ENCODE measurements at regions of chr7 and their contacts with region 1.

Region 1: DNA sequence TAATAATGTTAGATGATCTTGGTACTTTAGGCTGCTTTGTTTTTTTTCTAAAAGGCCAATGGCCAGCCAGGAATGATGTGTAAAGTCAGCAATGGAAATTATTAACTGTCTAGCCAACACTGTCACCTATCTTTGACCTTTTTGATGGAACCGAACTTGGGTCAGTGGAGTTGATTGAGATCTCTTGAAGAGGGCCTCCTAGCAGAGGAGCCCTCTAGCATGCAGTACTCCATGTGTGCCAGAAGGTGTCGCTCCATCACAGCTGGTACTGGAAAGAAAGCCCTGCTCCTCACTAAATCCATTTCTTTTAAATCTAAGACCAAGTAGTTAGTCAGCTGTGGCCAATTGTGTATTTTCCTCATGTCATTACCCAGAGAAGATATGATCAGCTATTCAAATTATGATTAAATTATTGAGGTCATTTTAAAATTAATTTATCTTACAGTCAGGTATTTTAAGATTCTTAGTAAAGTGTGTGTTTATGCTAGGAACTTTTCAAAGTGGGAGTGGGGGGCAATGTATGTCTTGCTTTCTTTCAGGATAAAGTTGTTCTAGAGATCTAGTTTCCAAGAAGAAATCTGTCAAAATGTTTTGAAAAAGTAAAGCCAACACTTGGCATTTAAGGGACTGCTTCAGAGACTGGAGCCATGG is 33.1 kb upstream of the CROT start:
- DNase-seq: peak; percentile 63
- H3K4me3 ChIP-seq: no peak overlapping the region
- H3K27ac ChIP-seq: no peak overlapping the region
- H3K4me1 ChIP-seq: no peaks in the 10 kb centered on the region
- H3K27me3 ChIP-seq: no peaks in the 10 kb centered on the region
- CTCF ChIP-seq: peak; percentile 98

Region 2: DNA sequence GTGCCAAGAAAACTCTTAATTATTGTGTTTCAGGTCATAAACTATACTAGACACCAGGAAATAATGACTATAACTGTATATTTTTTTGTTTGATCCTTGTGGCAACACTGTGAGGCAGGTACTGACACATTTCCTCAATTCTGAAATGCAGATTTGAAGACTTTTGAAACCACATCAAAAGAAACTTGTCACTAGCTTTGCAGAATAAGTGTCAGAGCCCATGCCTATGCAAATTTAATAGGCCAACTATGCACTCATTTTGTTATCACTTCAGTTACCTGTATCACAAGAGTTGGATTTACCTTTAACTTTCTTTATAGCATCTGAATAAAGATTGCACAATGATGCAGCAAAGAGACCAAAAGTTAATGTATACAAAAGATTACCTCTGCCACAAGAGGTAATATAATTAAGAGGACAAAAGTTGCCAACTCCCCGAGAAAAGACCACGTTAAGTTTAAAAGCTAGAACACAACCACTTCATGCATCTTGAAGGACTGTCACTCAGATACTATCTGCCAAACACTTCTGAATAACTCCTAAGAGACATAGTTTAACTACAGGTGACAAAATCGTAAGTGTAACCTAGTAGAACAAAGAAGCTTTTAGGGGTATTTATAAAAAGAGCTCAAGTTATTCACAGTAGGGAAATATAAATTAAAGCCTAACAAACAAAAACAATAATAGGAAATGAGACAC is 333.4 kb before region 1 on chr7:
- intact Hi-C with region 1: no loop called
- DNase-seq: no peak
- H3K4me3 ChIP-seq: no peak overlapping the region
- H3K27ac ChIP-seq: peak overlapping the region; percentile 54
- H3K4me1 ChIP-seq: peaks cover 3% of the 10 kb centered on the region
- H3K27me3 ChIP-seq: no peaks in the 10 kb centered on the region
- CTCF ChIP-seq: no peak

Region 3: DNA sequence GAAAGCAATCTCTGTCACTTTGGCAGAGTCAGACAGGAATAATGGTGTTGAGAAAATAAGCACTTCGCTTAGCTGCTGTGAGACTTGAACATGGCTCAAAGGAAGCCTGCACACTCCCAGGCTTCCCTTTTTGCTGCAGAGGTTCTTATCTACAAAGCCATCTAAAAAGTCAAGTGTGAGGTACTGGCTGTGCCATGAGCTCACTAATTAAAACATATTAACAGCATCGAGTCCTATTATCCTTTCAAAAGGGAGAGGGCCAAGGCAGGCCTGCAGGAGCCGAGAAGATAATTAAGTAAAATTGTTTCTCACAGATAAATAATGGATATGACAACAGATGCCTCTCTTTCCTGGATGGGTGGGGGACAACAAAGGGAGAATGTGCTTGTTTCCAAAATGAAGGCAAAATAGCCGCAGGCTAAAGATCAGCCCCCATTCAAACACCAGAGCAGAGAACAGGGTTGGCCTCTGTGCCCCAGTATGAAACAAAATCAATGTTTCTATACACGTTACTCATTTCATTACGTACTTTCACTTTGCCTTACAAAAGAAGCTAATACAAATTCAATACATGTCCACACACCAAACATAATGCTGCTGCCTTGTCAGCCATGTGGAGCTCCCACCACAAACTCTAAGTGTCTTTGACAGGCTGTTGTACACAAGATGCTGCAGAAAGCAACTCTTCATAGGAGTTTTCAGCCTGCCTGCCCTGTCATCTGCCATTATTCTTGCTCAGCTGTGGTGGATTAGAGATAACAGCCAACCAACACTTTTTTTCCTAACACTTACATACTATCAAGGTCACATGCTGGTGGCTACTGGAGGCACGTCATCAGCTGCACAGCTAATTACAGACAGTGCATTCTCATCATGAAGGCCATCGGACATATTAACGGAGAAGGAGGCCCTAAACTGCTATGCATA is 308.2 kb before region 1 on chr7:
- intact Hi-C with region 1: no loop called
- DNase-seq: no peak
- H3K4me3 ChIP-seq: no peak overlapping the region
- H3K27ac ChIP-seq: no peak overlapping the region
- H3K4me1 ChIP-seq: no peaks in the 10 kb centered on the region
- H3K27me3 ChIP-seq: no peaks in the 10 kb centered on the region
- CTCF ChIP-seq: no peak

Region 4: DNA sequence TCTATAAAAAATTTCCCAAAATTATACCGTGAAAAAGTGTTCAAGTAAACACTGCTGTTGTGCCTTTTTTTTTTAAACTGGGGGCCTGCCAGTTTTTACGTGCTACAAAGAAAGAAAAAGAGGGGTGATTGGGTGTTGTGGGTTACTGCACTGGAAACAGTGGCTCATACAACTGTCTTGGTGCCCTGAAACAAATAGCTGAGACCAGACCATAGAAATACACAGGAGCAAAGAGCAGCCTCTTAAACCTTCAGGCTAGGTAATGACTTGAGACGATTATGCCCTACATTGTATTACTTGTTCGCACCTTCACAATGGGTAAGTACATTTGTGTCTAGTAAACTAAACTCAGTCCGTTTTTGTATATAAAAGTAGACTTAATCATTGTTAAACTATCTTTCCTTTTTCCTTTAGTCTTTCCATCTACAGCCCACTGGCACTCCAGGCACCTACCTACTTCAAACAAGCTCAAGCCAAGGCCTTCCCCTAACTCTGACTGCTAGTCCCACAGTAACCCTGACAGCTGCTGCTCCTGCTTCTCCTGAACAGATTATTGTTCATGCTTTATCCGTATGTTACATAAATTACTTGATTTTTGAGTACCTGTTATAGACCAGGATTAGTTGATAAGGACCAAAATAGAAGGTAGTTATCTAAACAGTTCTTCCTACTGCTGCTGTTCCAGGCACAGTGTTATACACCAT is 119.4 kb before region 1 on chr7:
- intact Hi-C with region 1: no loop called
- DNase-seq: no peak
- H3K4me3 ChIP-seq: no peak overlapping the region
- H3K27ac ChIP-seq: no peak overlapping the region
- H3K4me1 ChIP-seq: no peaks in the 10 kb centered on the region
- H3K27me3 ChIP-seq: no peaks in the 10 kb centered on the region
- CTCF ChIP-seq: no peak

Region 5: DNA sequence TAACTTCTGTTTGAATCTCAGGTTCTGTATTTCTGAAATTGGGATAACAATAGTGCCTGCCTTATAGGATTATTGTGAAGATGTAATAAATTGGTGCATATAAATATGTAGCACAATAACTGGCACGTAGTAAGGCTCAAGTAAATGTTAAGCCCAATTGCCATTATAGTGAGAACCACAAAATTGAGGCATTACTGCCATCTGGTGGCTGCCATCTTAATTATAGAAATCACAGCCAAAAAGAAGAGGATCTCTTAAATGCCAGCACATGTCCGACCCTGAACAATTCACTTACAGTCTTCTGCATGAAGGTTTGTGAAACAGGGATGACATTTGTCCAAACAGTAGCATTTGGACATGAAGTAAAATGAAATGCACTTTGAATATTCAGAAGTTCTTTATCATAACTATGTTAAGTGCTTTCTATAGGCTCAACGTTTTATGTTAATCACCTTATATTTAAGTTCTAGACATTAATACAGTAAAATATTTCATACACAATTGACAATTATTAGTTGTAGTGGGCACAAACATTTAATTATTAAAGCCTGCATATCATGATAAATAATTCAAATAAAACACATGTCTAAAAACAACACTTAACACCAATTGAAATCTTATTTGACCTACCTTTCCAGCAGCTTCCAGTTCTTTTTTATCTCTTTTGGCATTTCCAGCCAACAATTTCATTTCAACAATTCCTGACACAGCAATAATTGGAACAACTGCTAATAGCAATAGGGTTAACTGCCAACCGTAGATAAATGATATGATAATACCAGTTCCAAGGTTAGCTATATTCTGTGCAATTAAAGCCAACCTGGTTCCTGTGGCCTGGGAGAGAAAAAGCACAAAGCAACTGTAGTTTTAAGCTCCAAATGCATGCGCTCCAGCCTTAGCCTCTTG is 104.6 kb after region 1 on chr7:
- intact Hi-C with region 1: loop called (anchors 2 kb)
- DNase-seq: peak; percentile 79
- H3K4me3 ChIP-seq: no peak overlapping the region
- H3K27ac ChIP-seq: no peak overlapping the region
- H3K4me1 ChIP-seq: no peaks in the 10 kb centered on the region
- H3K27me3 ChIP-seq: no peaks in the 10 kb centered on the region
- CTCF ChIP-seq: peak; percentile 54

Region 6: GRCh38 chr7:87628780-87629569 is 316.6 kb after region 1 on chr7:
- intact Hi-C with region 1: no loop called
- DNase-seq: peak; percentile 67
- H3K4me3 ChIP-seq: peak overlapping the region; percentile 48
- H3K27ac ChIP-seq: peak overlapping the region; percentile 55
- H3K4me1 ChIP-seq: no peaks in the 10 kb centered on the region
- H3K27me3 ChIP-seq: no peaks in the 10 kb centered on the region
- CTCF ChIP-seq: no peak

Measured in colonic mucosa (tissue), 4 donors.